GM12878 (cell line): ENCODE measurements at regions of chr6 and their contacts with region 1.

Region 1: DNA sequence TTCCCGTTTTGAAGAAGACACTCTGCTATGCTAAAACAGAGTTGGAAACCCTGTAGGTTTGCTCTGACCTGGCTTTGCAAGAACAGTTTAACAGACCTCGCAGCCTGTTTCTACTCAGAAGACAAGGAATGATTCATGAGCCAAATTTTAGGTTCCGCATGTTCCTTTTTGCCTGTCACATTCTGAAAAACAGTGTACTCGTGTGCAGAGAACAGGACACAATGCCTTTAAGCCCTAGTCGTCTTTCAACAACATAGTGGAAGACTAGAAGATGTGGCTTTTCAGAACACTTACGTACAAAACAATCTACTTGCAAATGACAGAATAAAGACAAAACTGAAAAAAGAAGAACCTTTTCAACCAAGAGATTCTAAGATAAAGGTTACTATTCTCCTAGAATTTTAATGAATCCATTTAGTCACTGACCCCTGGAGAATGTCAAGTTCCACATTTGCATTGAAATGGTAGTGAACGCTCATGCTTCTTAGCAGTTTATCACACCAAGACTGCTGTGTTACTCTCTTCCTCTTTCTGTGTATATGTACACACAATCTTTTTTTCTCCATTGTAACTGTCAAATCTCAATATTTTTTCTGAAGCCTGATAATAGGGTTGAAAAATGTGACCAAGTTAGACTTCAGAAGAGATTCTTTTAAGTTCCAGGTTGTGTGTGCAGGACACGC is 220.7 kb upstream of the NRSN1 start:
- DNase-seq: no peak
- ATAC-seq: no peak
- H3K4me3 ChIP-seq: no peak overlapping the region
- H3K27ac ChIP-seq: no peak overlapping the region
- H3K4me1 ChIP-seq: no peaks in the 10 kb centered on the region
- H3K27me3 ChIP-seq: no peaks in the 10 kb centered on the region
- CTCF ChIP-seq: no peak
- EP300 ChIP-seq: no peak
- POLR2A ChIP-seq: no peak
- RAD21 ChIP-seq: no peak

Region 2: GRCh38 chr6:24340998-24341938 is 436.0 kb after region 1 on chr6:
- CTCF ChIA-PET with region 1: no interaction called
- POLR2A ChIA-PET with region 1: no interaction called
- RAD21 ChIA-PET with region 1: no interaction called
- SMC1A ChIA-PET with region 1: no interaction called
- in situ Hi-C with region 1: no loop called
- intact Hi-C with region 1: loop called (anchors 5 kb)
- DNase-seq: no peak
- ATAC-seq: no peak
- H3K4me3 ChIP-seq: no peak overlapping the region
- H3K27ac ChIP-seq: no peak overlapping the region
- H3K4me1 ChIP-seq: no peaks in the 10 kb centered on the region
- H3K27me3 ChIP-seq: no peaks in the 10 kb centered on the region
- CTCF ChIP-seq: no peak
- EP300 ChIP-seq: no peak
- POLR2A ChIP-seq: no peak
- RAD21 ChIP-seq: no peak